PC-9 (cell line): ENCODE measurements at regions of chr13 and their contacts with region 1.

Region 1: DNA sequence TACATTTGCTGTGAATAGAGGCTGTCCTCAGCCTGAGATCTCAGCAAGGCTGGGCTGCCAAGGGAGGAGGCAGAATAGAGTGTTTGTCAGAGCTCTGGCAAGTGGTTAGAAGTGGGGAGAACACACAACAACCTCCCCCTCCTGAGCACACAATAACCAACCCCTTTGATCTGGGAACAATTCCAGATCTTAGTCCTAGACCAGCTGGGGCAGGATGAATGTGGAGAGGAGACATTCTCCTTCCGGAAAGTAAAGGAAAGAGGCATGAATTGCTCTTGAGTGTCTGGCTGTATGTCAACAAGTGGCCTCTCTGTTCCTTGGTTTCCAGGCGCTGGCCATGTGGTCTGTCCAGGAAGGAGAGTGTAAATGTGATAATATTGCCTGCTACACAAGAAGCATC is 114.9 kb upstream of the TMTC4 start:
- DNase-seq: no peak
- H3K4me3 ChIP-seq: no peak overlapping the region
- H3K27ac ChIP-seq: no peak overlapping the region
- H3K4me1 ChIP-seq: no peaks in the 10 kb centered on the region
- H3K27me3 ChIP-seq: peaks cover 45% of the 10 kb centered on the region
- CTCF ChIP-seq: no peak

Region 2: DNA sequence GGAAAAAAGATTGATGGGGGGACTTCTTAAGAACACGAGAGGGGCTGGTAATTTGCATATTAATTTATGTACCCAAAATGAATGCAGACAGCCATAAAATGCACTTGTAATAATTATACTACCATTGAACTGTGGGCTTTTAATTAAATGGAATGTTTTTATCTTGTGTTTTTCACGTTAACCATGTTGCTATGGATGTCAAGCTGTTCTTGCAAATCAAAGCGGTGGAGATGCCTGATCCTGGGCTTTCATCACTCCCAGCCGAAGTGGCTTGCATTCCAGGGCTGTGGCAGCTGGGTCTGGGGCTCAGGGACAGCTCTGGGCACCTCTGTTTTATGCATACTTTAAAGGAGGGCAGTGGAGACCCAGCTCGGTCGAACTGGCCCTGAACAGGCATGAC is 64.5 kb after region 1 on chr13:
- CTCF ChIA-PET with region 1: no interaction called
- POLR2A ChIA-PET with region 1: no interaction called
- intact Hi-C with region 1: loop called (anchors 10 kb)
- DNase-seq: no peak
- H3K4me3 ChIP-seq: no peak overlapping the region
- H3K27ac ChIP-seq: no peak overlapping the region
- H3K4me1 ChIP-seq: no peaks in the 10 kb centered on the region
- H3K27me3 ChIP-seq: peaks cover 61% of the 10 kb centered on the region
- CTCF ChIP-seq: no peak